ENCODE measurements at regions of chr5 and their contacts with region 1.

Region 1: GRCh38 chr5:169812786-169813185 is 167.5 kb downstream of the INSYN2B start:
- DNase-seq: no peak
- H3K4me3 ChIP-seq: no peak overlapping the region
- H3K27ac ChIP-seq: no peak overlapping the region
- H3K4me1 ChIP-seq: no peaks in the 10 kb centered on the region
- H3K27me3 ChIP-seq: no peaks in the 10 kb centered on the region
- CTCF ChIP-seq: no peak

Region 2: DNA sequence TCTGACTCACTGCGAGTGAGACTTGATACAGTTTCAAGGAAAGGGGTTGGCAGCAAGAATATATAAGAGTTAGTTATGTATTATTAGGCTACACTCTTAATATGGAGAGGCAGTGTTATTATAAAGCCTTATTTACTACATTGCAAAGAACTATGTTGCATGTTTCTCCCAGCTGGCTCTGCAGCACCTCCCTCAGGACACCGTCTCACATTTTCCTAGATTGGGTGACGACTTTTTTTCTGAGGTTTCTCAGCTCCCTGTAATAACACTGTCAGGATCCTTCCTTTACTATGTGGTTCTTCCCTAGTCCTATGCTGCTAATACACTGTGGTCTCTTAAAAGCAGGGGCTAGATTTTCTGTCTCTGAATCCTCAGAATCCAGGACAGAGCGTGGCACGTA is 13.8 kb after region 1 on chr5:
- CTCF ChIA-PET with region 1: no interaction called
- dilution Hi-C with region 1: no loop called
- in situ Hi-C with region 1: no loop called
- intact Hi-C with region 1: loop called (anchors 1 kb)
- DNase-seq: no peak
- H3K4me3 ChIP-seq: no peak overlapping the region
- H3K27ac ChIP-seq: no peak overlapping the region
- H3K4me1 ChIP-seq: peaks cover 5% of the 10 kb centered on the region
- H3K27me3 ChIP-seq: no peaks in the 10 kb centered on the region
- CTCF ChIP-seq: peak; percentile 13 to 37

Region 3: DNA sequence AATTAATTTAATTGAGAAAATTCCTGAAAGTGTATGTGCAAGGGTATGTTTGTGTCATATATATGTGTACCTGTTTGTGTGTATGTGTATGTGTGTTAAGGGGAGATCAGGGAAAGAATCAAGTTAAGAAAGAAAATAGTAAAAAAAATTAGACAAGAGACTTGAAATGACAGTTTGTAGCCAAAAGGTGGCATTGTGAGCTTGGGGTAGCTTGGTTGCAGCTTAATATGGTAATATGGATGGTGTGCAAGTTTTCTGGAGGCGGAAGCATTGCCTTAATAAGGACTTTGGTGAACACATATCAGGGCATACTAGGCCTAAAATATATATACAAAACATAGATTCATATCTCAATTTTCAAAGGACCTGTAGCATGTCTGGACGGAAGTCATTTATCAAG is 37.6 kb after region 1 on chr5:
- CTCF ChIA-PET with region 1: no interaction called
- dilution Hi-C with region 1: no loop called
- in situ Hi-C with region 1: no loop called
- intact Hi-C with region 1: no loop called
- DNase-seq: no peak
- H3K4me3 ChIP-seq: no peak overlapping the region
- H3K27ac ChIP-seq: no peak overlapping the region
- H3K4me1 ChIP-seq: peaks cover 6% of the 10 kb centered on the region
- H3K27me3 ChIP-seq: no peaks in the 10 kb centered on the region
- CTCF ChIP-seq: peak in 1 of 2 donors; percentile 44

Measured in mammary epithelial cell (primary cell).